Psoas muscle (tissue), 8 donors: ENCODE measurements at regions of chr13 and their contacts with region 1.

Region 1: GRCh38 chr13:30132623-30133553 is 174.5 kb downstream of the KATNAL1 start:
- DNase-seq: peak; percentile 97
- ATAC-seq: peak; percentile 95 to 99 (median 96)
- H3K4me3 ChIP-seq: peak overlapping the region; percentile 15
- H3K27ac ChIP-seq: no peak overlapping the region
- H3K4me1 ChIP-seq: no peaks in the 10 kb centered on the region
- H3K27me3 ChIP-seq: no peaks in the 10 kb centered on the region
- CTCF ChIP-seq: peak; percentile 95

Region 2: GRCh38 chr13:30334663-30335386 is 201.9 kb after region 1 on chr13:
- intact Hi-C with region 1: loop called in 1 of 2 experiments (anchors 5 kb)
- DNase-seq: no peak
- ATAC-seq: peak in 3 of 4 donors; percentile 23 to 44 (median 39)
- H3K4me3 ChIP-seq: no peak overlapping the region
- H3K27ac ChIP-seq: no peak overlapping the region
- H3K4me1 ChIP-seq: peaks cover 3% of the 10 kb centered on the region
- H3K27me3 ChIP-seq: no peaks in the 10 kb centered on the region
- CTCF ChIP-seq: peak; percentile 35

Region 3: GRCh38 chr13:30572859-30573275 is 440.0 kb after region 1 on chr13:
- intact Hi-C with region 1: loop called in 1 of 2 experiments (anchors 10 kb)
- DNase-seq: no peak
- ATAC-seq: no peak
- H3K4me3 ChIP-seq: peak overlapping the region; percentile 50
- H3K27ac ChIP-seq: no peak overlapping the region
- H3K4me1 ChIP-seq: no peaks in the 10 kb centered on the region
- H3K27me3 ChIP-seq: no peaks in the 10 kb centered on the region
- CTCF ChIP-seq: peak; percentile 8

Region 4: GRCh38 chr13:30865123-30866049 is 732.5 kb after region 1 on chr13:
- intact Hi-C with region 1: loop called (anchors 5 kb)
- DNase-seq: peak; percentile 79 to 87
- ATAC-seq: peak; percentile 76 to 80 (median 78)
- H3K4me3 ChIP-seq: no peak overlapping the region
- H3K27ac ChIP-seq: peak overlapping the region; percentile 70
- H3K4me1 ChIP-seq: peaks cover 31% of the 10 kb centered on the region
- H3K27me3 ChIP-seq: no peaks in the 10 kb centered on the region
- CTCF ChIP-seq: peak; percentile 90

Region 5: GRCh38 chr13:31044377-31045285 is 911.7 kb after region 1 on chr13:
- intact Hi-C with region 1: loop called in 1 of 2 experiments (anchors 5 kb)
- DNase-seq: peak; percentile 74 to 81
- ATAC-seq: peak; percentile 85 to 93 (median 87)
- H3K4me3 ChIP-seq: no peak overlapping the region
- H3K27ac ChIP-seq: no peak overlapping the region
- H3K4me1 ChIP-seq: peaks cover 11% of the 10 kb centered on the region
- H3K27me3 ChIP-seq: peaks cover 0 to 2% (median 0%) of the 10 kb centered on the region in 3 donors
- CTCF ChIP-seq: peak; percentile 93